ENCODE measurements at regions of chr7 and their contacts with region 1.

Region 1: DNA sequence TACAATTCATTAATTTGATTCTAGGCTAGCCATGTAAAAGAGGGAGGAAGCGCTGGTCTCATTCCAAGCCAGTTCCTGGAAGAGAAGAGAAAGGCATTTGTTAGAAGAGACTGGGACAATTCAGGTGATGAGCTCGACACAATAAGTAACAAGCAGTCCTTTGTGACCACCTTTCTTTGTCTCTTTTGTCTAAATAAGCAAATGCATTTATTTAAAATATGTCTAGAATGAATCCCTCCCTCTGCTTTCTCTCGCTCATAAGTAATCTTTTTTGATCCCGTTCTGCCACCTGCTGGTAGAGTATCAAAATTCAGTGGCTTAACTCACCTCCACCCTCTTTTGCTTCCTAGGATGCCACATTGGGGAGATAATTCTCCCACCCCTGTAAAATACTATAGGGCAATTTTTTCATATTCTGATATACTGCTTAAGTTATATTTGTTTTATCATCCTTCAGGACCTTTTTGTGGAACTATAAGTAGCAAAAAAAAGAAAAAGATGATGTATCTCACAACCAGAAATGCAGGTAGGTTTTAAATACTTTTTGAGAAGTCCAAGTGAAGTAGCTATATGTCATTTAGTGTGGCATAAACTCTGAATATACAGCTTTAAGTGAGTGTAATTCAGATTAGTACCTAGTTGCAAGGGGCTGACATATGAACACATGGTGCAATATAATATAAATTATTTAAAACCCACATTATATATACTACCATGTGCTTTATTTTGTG is 91.5 kb downstream of the GSDME start:
- DNase-seq: no peak
- ATAC-seq: no peak
- H3K4me3 ChIP-seq: no peak overlapping the region
- H3K27ac ChIP-seq: no peak overlapping the region
- H3K4me1 ChIP-seq: no peaks in the 10 kb centered on the region
- H3K27me3 ChIP-seq: no peaks in the 10 kb centered on the region

Region 2: GRCh38 chr7:24284699-24285506 is 380.8 kb before region 1 on chr7:
- intact Hi-C with region 1: loop called (anchors 2 to 5 kb)
- DNase-seq: no peak
- ATAC-seq: peak; percentile 37
- H3K4me3 ChIP-seq: no peak overlapping the region
- H3K27ac ChIP-seq: no peak overlapping the region
- H3K4me1 ChIP-seq: no peaks in the 10 kb centered on the region
- H3K27me3 ChIP-seq: peaks cover 0 to 2% of the 10 kb centered on the region in 2 donors

Region 3: GRCh38 chr7:24290004-24290641 is 375.6 kb before region 1 on chr7:
- intact Hi-C with region 1: loop called (anchors 2 to 5 kb)
- DNase-seq: no peak
- ATAC-seq: no peak
- H3K4me3 ChIP-seq: no peak overlapping the region
- H3K27ac ChIP-seq: no peak overlapping the region
- H3K4me1 ChIP-seq: no peaks in the 10 kb centered on the region
- H3K27me3 ChIP-seq: no peaks in the 10 kb centered on the region

Region 4: DNA sequence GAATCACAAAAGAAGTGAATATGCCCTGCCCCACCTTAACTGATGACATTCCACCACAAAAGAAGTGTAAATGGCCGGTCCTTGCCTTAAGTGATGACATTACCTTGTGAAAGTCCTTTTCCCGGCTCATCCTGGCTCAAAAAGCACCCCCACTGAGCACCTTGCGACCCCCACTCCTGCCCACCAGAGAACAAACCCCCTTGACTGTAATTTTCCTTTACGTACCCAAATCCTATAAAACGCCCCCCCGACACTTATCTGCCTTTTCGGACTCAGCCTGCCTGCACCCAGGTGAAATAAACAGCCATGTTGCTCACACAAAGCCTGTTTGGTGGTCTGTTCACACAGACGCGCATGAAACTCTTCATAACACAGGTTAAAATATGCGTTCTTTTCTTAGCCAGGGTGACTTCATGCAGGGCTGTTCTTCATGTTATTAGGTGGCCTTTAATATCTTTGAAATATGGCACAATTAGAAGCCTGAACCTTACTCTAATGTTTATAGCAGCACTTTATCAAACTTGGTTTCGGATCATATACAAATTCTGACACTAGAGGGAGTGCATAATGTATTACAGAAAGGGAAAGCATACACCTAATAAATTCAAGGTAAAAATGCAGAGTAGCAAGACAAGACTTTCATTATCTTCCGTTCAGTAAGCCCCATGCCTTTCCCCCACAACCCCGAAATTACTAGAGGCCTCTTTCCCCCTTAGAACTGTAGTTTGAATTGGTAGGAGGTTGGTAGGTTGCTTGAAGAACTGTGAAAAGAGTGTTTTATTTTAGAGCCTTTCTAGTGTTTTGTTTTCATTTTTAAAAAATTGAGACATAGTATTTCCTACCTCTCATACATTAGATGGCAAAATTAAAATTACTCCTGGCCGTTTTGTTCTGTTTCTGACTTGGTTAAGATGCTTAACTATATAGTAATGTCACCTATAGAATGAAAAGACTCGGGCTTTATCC is 263.8 kb before region 1 on chr7:
- intact Hi-C with region 1: loop called (anchors 5 kb)
- DNase-seq: no peak
- ATAC-seq: no peak
- H3K4me3 ChIP-seq: peak overlapping the region; percentile 14 to 59
- H3K27ac ChIP-seq: no peak overlapping the region
- H3K4me1 ChIP-seq: no peaks in the 10 kb centered on the region
- H3K27me3 ChIP-seq: no peaks in the 10 kb centered on the region

Region 5: GRCh38 chr7:24572997-24573625 is 92.6 kb before region 1 on chr7 and contains the start of gene PALS2:
- intact Hi-C with region 1: loop called in 1 of 2 experiments (anchors 2 kb)
- DNase-seq: peak; percentile 78 to 91
- ATAC-seq: peak; percentile 88
- H3K4me3 ChIP-seq: peak within 1 kb of the TSS; percentile 94 to 98
- H3K27ac ChIP-seq: peak within 1 kb of the TSS; percentile 92 to 95
- H3K4me1 ChIP-seq: no peaks in the 10 kb centered on the region
- H3K27me3 ChIP-seq: no peaks in the 10 kb centered on the region
- total RNA-seq, gene PALS2: 44.9 to 57.3 TPM

Region 6: GRCh38 chr7:24587848-24588247 is 77.9 kb before region 1 on chr7:
- intact Hi-C with region 1: no loop called
- DNase-seq: no peak
- ATAC-seq: no peak
- H3K4me3 ChIP-seq: no peak overlapping the region
- H3K27ac ChIP-seq: no peak overlapping the region
- H3K4me1 ChIP-seq: peaks cover 0 to 2% of the 10 kb centered on the region in 2 donors
- H3K27me3 ChIP-seq: no peaks in the 10 kb centered on the region

Region 7: GRCh38 chr7:24622646-24623182 is 43.0 kb before region 1 on chr7:
- intact Hi-C with region 1: no loop called
- DNase-seq: no peak
- ATAC-seq: no peak
- H3K4me3 ChIP-seq: no peak overlapping the region
- H3K27ac ChIP-seq: no peak overlapping the region
- H3K4me1 ChIP-seq: no peaks in the 10 kb centered on the region
- H3K27me3 ChIP-seq: no peaks in the 10 kb centered on the region

Region 8: GRCh38 chr7:24697416-24697815 is 31.7 kb after region 1 on chr7:
- intact Hi-C with region 1: no loop called
- DNase-seq: no peak
- ATAC-seq: no peak
- H3K4me3 ChIP-seq: no peak overlapping the region
- H3K27ac ChIP-seq: no peak overlapping the region
- H3K4me1 ChIP-seq: peaks cover 1 to 3% of the 10 kb centered on the region in 2 donors
- H3K27me3 ChIP-seq: no peaks in the 10 kb centered on the region